ENCODE measurements at regions of chr10 and their contacts with region 1.

Region 1: GRCh38 chr10:15097011-15097812 is at the start of gene RPP38:
- DNase-seq: peak; percentile 95 to 98 (median 96)
- H3K4me3 ChIP-seq: peak within 1 kb of the TSS; percentile 69 to 100 (median 95)
- H3K27ac ChIP-seq: peak within 1 kb of the TSS; percentile 90 to 100 (median 98)
- H3K27me3 ChIP-seq: no peaks in the 10 kb centered on the region
- CTCF ChIP-seq: peak in 19 of 56 donors; percentile 6 to 48 (median 19)
- total RNA-seq, gene RPP38: 4.9 to 13.9 (median 9.2) TPM

Region 2: GRCh38 chr10:14225379-14226150 is 871.6 kb before region 1 on chr10:
- intact Hi-C with region 1: no loop called
- DNase-seq: peak in 1 of 10 donors; percentile 47
- H3K4me3 ChIP-seq: peak overlapping the region in 2 of 59 donors; percentile 2 to 29
- H3K27ac ChIP-seq: no peak overlapping the region
- H3K27me3 ChIP-seq: no peaks in the 10 kb centered on the region
- CTCF ChIP-seq: no peak

Region 3: DNA sequence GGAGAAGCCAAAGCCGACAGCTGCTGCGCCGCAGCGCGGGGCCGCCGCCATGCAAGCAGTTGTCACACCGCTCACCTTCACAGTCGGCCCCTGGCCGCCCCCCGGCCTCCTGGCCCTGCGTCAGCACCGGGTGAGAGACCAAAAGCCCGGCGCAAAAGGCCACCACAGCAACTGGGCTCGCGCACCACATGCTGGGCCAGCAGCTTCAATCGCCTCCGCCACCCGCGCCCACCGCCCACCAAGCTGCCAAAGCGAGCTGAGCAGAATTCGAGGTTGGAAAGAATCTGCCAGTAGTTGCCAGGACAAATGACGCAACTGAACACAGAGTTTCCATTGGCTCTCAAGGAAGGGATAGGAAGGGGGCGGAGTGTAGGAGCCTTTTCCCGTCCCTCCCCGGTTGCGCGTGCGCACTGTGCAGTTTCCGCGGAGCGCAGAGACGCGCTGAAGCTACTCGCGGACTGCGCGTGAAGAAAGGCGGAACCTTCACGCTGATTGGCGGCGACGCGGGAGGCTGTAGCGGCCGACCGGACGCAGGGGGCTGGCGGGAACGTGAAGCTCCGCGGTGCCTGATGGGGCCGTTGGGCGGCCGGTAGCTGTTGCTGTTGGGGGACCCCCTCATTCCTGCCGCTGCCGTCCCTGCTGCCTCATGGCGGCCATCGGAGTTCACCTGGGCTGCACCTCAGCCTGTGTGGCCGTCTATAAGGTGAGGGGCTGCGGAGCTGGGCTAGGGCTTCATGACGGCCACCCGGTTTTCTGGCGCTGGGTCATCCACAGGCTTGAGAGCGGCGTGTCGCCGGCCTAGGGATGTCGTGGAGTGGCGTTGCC is 259.2 kb before region 1 on chr10 and contains the starts of genes CDNF, HSPA14 and MSANTD7:
- intact Hi-C with region 1: loop called in 1 of 2 experiments (anchors 5 kb)
- DNase-seq: peak; percentile 97 to 99 (median 98)
- H3K4me3 ChIP-seq: peak within 1 kb of the TSS; percentile 69 to 100 (median 96)
- H3K27ac ChIP-seq: peak within 1 kb of the TSS; percentile 66 to 99 (median 97)
- H3K27me3 ChIP-seq: no peaks in the 10 kb centered on the region
- CTCF ChIP-seq: peak in 36 of 56 donors; percentile 5 to 56 (median 33)
- total RNA-seq, gene CDNF: 0.33 to 8.1 (median 1.9) TPM in 108 of 120 experiments, not detected in the others
- total RNA-seq, gene HSPA14: 7.8 to 24.7 (median 14.3) TPM
- total RNA-seq, gene MSANTD7: 6.7 to 16.4 (median 11.0) TPM

Region 4: GRCh38 chr10:14954001-14954770 is 143.0 kb before region 1 on chr10 and contains the start of gene DCLRE1C:
- intact Hi-C with region 1: loop called (anchors 5 to 10 kb)
- DNase-seq: peak; percentile 78 to 95 (median 90)
- H3K4me3 ChIP-seq: peak within 1 kb of the TSS; percentile 62 to 99 (median 89)
- H3K27ac ChIP-seq: peak within 1 kb of the TSS in 58 of 59 donors; percentile 18 to 90 (median 75)
- H3K27me3 ChIP-seq: no peaks in the 10 kb centered on the region
- CTCF ChIP-seq: peak in 15 of 56 donors; percentile 2 to 40 (median 11)
- total RNA-seq, gene DCLRE1C: 4.4 to 22.8 (median 8.8) TPM

Region 5: DNA sequence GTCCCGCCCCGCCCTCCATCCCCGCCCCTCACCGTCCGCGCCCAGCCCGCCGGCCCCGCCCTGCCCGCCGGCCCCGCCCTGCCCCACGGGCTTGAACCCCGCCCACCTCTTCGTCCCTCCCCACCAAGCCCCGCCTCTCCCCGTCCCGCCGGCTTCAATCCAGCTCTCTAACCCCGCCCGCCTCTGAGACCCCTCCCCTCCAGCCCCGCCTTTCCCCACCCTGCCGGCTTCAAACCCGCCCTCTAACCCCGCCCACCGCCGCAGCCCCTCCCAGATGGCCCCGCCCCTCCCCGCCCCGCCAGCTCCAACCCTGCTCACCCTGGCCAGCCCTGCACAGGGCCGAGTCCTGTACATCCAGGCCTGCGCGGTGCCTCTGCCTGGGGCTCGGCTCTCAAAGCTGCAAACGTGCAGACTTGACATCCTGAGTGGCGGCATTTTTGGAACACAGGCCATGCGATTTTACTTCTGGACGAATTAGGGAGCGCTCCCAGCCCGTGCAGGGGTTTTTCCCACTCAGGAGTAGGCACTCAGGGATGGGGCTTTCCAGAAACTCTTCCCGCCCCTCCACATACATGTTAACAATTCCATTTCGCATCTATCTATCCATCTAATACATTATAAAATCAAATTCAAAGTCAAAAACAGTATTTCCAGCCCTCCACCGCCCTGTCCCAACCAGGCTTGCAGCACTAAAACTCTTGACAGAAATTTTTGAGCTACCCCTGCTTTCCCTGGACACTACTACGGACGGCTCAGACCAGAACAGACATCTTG is 71.8 kb after region 1 on chr10:
- intact Hi-C with region 1: loop called (anchors 5 to 10 kb)
- DNase-seq: peak; percentile 91 to 97 (median 94)
- H3K4me3 ChIP-seq: peak overlapping the region in 53 of 59 donors; percentile 3 to 99 (median 42)
- H3K27ac ChIP-seq: peak overlapping the region in 53 of 59 donors; percentile 7 to 88 (median 70)
- H3K27me3 ChIP-seq: no peaks in the 10 kb centered on the region
- CTCF ChIP-seq: no peak

Measured in dorsolateral prefrontal cortex (tissue), 120 donors.